ENCODE measurements at regions of chr2 and their contacts with region 1.

Region 1: GRCh38 chr2:235746257-235747084 is 252.6 kb downstream of the AGAP1 start:
- DNase-seq: peak in 1 of 2 donors; percentile 61
- H3K4me3 ChIP-seq: no peak overlapping the region
- H3K27ac ChIP-seq: no peak overlapping the region
- H3K4me1 ChIP-seq: peaks cover 0 to 13% (median 6%) of the 10 kb centered on the region in 4 donors
- H3K27me3 ChIP-seq: no peaks in the 10 kb centered on the region
- CTCF ChIP-seq: peak; percentile 64 to 75

Region 2: DNA sequence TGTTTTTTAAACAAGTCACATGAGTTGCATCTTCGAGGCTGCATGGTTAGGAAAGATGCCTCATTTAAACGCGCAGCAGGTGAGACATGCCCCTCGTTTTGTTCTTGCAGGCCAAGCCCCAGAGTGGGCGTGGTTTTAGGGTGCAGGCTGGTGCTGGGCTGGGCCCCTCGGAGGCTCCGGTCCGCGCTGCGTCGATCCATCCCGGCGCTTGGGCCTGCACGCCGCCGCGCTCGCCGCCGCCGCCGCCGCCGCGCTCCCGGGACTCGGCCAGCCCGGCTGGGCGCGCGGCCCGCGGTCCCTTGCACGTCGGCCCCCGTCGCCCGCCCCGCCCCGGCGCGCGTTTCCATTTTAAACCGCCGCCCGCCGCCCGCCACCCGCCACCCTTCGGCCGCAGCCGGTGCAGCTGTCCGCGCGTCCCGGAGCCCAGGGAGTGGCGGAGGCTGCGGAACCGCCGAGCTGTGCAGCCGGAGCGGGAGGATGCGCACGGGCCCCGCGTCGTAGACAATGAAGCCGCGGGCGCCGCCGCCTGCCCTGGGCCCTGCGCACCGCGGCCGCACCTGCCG is 77.1 kb before region 1 on chr2:
- intact Hi-C with region 1: loop called (anchors 10 kb)
- DNase-seq: peak; percentile 45 to 76
- H3K4me3 ChIP-seq: peak overlapping the region; percentile 59 to 69
- H3K27ac ChIP-seq: no peak overlapping the region
- H3K4me1 ChIP-seq: peaks cover 0 to 39% (median 27%) of the 10 kb centered on the region in 4 donors
- H3K27me3 ChIP-seq: no peaks in the 10 kb centered on the region
- CTCF ChIP-seq: no peak

Region 3: DNA sequence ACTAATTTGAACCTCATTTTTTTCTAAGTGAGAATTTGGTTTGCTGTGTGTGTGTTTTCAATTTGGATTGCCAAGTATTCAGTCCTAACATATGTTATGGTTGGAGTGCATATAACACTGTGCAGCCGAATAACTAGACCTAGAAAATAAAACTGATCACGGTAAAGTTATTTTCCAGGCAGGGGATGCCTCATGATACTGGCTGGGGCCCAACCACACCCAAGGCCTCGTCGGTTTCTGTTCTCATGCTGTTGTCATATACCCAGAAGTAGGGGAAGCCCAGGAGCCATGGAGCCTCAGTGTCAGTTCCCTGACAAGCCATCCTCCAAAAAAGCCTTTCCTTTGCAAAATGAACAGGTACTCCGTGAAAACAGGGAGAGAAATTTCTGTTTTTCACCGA is 261.5 kb after region 1 on chr2:
- intact Hi-C with region 1: no loop called
- DNase-seq: no peak
- H3K4me3 ChIP-seq: no peak overlapping the region
- H3K27ac ChIP-seq: no peak overlapping the region
- H3K4me1 ChIP-seq: no peaks in the 10 kb centered on the region
- H3K27me3 ChIP-seq: no peaks in the 10 kb centered on the region
- CTCF ChIP-seq: no peak